ENCODE measurements at regions of chr3 and their contacts with region 1.

Region 1: DNA sequence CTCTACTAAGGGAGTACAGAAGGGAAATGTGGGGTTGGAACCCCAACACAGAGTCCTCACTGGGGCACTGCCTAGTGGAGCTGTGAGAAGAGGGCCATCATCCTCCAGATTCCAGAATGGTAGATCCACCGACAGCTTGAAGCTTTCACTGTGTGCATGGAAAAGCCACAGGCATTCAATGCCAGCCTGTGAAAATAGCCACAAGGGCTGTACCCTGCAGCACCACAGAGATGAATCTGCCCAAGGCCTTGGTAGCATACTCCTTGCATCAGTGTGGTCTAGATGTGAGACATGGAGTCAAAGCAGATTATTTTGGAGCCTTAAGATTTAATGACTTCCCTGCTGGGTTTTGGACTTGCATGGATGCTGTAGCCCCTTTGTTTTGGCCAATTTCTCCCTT is 39.3 kb upstream of the KCNMB2 start:
- DNase-seq: no peak
- ATAC-seq: no peak

Region 2: GRCh38 chr3:178475062-178475461 is 21.8 kb before region 1 on chr3:
- intact Hi-C with region 1: loop called (anchors 1 kb)
- DNase-seq: no peak
- ATAC-seq: no peak

Region 3: GRCh38 chr3:178532476-178532875 is 35.6 kb after region 1 on chr3:
- intact Hi-C with region 1: no loop called
- DNase-seq: no peak
- ATAC-seq: no peak

Measured in Right ventricle myocardium inferior (tissue), 1 donor.